Ovary (tissue), 10 donors: ENCODE measurements at regions of chr14 and their contacts with region 1.

Region 1: DNA sequence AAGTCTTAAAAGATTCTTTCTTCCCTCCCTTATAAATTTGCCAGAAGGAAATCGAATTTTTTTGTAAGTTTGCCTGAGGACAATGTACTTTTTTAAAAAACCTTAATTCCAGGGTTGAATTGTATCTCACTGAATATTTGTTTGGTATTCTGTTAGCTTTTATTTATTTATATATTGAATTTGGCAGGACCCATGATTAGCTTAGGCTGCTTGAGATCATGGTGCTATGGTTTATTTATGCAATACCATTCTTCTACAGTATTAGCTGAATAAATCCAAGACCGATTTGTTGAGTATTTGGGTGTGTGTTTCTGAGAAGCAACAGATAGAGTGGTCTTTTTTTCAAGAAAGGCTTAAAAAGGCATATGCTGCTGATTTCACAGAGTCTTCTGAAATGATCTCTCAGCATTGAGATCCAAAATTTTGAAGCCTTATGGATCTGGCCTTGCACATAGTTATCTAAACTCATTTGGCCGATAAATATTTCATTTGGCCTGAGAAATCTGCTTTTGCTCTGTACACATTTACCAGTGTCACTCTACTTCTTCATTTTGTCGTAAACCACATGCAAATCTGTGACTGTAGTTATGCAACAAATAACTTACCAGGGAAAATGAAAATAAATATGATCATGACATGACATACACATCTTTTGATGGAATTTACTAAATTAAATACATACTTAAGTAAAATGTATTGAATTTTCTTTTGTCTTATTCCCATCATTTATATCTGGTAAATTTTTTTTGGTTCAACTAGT is 265.8 kb upstream of the FLRT2 start:
- DNase-seq: no peak
- H3K4me3 ChIP-seq: no peak overlapping the region
- H3K27ac ChIP-seq: no peak overlapping the region
- H3K4me1 ChIP-seq: no peaks in the 10 kb centered on the region
- H3K27me3 ChIP-seq: no peaks in the 10 kb centered on the region
- CTCF ChIP-seq: no peak
- EP300 ChIP-seq: no peak
- POLR2A ChIP-seq: no peak

Region 2: DNA sequence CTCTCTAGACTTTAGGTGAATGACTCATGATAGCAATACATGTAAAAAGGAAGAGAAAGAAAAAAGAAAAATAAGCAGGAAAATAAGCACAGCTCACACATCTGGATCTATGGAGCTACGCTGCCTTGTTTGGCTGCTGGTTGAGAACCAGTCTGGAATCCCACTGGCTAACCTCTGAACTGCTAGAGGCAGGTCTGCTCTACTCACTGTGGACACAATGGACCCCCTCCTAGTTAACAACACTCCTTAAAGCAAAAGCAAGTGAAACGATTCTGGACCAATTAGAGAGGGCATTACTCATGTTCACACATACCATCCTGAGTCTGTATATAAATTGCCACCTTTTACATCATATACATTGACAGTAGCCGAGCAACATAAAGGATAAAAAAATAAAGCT is 117.3 kb before region 1 on chr14:
- intact Hi-C with region 1: no loop called
- DNase-seq: no peak
- H3K4me3 ChIP-seq: no peak overlapping the region
- H3K27ac ChIP-seq: no peak overlapping the region
- H3K4me1 ChIP-seq: no peaks in the 10 kb centered on the region
- H3K27me3 ChIP-seq: no peaks in the 10 kb centered on the region
- CTCF ChIP-seq: no peak
- EP300 ChIP-seq: no peak
- POLR2A ChIP-seq: no peak

Region 3: DNA sequence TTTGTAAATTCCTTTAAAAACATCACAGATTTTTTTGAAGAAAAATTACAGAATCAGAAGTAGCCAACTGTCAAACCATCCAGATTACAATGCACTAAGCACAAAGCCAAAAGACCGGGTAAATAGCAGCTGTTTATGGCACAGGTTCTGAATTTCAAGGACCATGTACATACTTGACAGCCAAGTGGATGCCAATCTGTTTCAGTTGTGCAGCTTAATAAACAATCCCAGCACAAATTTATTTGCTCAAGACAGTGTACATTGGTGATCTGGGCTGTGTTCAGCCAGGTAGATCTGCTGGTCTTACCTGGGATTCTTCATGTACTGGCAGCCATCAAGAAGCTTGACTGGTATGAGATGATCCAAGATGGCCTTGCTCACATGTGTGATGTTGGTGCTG is 36.0 kb after region 1 on chr14:
- intact Hi-C with region 1: loop called in 1 of 4 experiments (anchors 2 kb)
- DNase-seq: no peak
- H3K4me3 ChIP-seq: no peak overlapping the region
- H3K27ac ChIP-seq: no peak overlapping the region
- H3K4me1 ChIP-seq: no peaks in the 10 kb centered on the region
- H3K27me3 ChIP-seq: no peaks in the 10 kb centered on the region
- CTCF ChIP-seq: no peak
- EP300 ChIP-seq: no peak
- POLR2A ChIP-seq: no peak